ENCODE measurements at regions of chr3 and their contacts with region 1.

Region 1: DNA sequence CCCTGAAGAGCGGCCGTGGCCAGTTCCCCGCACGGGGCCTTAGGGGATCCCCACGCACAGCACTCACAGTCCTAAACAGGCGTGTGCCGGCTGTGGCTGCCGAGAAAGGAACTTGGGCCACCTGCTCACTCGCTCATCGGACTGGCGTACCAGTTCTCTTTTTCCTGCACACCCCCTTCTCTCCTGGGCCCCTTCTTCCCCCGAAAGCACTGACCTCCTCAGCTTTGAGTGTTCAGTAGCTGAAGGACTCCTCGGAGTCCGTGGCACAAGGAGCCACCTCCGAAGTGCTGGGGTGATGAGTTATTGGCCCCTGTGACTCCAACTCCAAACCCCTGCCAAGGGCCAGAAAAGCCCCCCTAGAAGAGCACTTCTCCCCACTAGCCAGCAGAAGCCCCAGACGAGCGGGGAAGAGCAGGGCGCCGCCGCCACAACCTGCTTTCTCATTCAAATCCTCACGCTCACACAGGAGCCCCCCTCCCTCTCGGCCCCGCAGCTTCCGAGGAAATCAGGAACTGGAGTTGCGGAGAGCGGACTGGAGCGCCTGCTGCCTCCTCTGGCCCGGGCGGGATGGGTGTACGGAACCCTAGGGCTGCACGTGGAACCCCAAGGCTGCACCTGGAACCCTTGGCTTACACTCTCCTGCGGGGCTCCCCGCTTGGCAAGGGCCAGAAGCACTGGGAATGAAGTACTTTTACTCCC is at the start of gene PLCH1:
- DNase-seq: peak; percentile 91 to 94
- H3K4me3 ChIP-seq: peak within 1 kb of the TSS; percentile 73
- H3K4me1 ChIP-seq: peaks cover 42% of the 10 kb centered on the region
- H3K27me3 ChIP-seq: no peaks in the 10 kb centered on the region

Region 2: GRCh38 chr3:155854141-155854940 is 109.6 kb after region 1 on chr3 and contains the start of gene SLC33A1:
- in situ Hi-C with region 1: loop called (anchors 10 kb)
- DNase-seq: peak; percentile 98 to 99
- H3K4me3 ChIP-seq: peak within 1 kb of the TSS; percentile 69
- H3K4me1 ChIP-seq: peaks cover 6% of the 10 kb centered on the region
- H3K27me3 ChIP-seq: no peaks in the 10 kb centered on the region